MCF 10A (cell line): ENCODE measurements at regions of chr10 and their contacts with region 1.

Region 1: DNA sequence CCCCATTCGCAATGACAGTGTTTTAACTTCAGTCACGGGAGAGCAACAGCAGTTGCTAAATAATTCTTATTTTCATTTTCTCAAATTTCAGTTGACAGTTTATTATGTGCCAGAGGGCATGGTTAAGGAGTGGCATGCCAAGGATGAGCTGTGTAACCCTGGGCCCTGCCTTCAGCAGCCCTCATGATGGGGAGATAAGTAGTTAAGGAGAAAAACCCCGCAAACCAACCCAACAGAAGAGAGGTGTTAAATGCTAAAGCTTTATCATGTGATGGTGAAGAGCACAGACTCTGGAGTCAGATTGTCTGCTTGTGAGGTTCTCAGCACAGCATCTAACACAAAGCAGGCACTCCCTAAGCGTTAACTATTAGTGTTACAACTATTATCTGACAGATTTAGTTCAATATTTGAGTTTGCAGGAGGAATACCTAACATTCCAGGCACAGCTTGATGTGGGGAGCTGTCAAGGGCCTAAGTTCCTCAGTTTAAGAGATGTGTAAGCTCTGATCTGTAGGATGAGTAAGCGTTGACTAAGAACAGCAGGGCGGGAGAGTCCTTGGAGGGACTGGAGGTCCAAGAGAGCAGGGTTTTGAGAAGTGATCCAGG is 29.6 kb downstream of the STAM start:
- DNase-seq: peak; percentile 79
- H3K4me3 Mint-ChIP-seq: peak overlapping the region; percentile 7
- H3K27ac Mint-ChIP-seq: peak overlapping the region; percentile 77
- H3K4me1 Mint-ChIP-seq: peaks cover 24% of the 10 kb centered on the region
- H3K27me3 Mint-ChIP-seq: no peaks in the 10 kb centered on the region
- CTCF ChIP-seq: no peak

Region 2: DNA sequence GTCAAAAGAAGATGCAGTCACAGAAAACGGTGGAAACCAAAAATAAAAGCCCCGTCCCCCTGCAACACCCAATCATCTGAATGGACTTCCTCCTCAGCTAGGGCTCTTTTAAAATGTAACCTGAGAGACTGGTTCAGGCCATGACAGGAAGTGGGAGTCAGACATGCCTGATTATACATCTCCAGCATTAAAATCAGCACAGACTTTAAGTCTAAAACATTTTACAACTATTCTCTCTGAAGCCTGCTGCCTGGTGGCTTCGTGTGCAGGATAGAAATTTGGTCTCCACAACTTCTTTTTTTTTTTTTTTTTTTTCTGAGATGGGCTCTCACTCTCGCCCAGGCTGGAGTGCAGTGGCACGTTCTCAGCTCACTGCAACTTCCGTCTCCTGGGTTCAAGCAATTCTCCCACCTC is 86.7 kb before region 1 on chr10:
- CTCF ChIA-PET with region 1: no interaction called
- POLR2A ChIA-PET with region 1: no interaction called
- intact Hi-C with region 1: no loop called
- DNase-seq: no peak
- H3K4me3 Mint-ChIP-seq: no peak overlapping the region
- H3K27ac Mint-ChIP-seq: no peak overlapping the region
- H3K4me1 Mint-ChIP-seq: no peaks in the 10 kb centered on the region
- H3K27me3 Mint-ChIP-seq: no peaks in the 10 kb centered on the region
- CTCF ChIP-seq: no peak

Region 3: DNA sequence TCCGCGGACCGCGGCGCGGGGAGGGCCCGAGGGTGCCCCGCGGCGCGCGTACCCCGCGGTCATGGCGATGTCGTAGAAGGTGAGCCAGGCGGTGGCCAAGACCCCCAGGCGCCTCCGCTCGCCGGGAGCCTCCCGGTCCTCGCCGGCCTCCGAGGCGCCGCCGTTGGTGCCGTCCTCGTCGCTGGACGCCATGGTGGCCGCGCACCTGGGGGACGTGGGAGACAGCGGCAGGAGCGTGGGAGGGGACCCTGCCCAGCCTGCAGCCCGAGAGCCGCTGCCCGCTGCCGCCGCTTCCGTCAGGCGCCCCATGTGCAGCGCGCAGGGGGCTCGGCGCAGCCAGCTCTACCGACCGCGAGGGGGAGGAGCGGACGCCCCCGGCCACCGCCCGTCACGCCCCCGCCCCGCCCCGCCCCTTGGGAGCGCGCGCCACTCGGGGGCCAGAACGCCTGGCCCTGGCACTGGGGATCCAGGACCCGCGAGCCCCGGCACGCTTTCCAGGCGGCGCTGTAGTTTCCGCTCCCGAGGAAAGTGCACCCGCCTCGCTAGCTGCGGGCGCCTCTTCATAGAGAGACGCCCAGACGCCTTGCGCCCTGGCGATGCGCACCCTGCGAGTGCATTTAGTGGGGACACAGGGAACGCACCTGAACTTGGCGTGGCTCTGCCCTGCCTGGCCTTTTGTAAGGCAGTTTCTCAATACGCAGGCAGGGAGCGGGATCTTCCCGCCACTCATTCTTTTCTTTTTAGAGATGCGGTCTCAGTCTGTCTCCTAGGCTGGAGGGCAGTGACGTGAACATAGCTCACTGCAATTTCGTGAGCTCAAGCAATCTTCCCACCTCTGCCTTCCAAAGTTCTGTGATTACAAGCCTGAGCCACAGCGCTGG is 56.3 kb before region 1 on chr10 and contains the start of gene HACD1:
- CTCF ChIA-PET with region 1: interaction called, 10 read pairs
- POLR2A ChIA-PET with region 1: interaction called, 24 read pairs
- intact Hi-C with region 1: no loop called
- DNase-seq: peak; percentile 74
- H3K4me3 Mint-ChIP-seq: peak within 1 kb of the TSS; percentile 80
- H3K27ac Mint-ChIP-seq: no peak within 1 kb of the TSS
- H3K4me1 Mint-ChIP-seq: peaks cover 8% of the 10 kb centered on the region
- H3K27me3 Mint-ChIP-seq: no peaks in the 10 kb centered on the region
- CTCF ChIP-seq: peak; percentile 10
- total RNA-seq, gene HACD1: 29.6 and 34.2 TPM in 2 replicates

Region 4: GRCh38 chr10:17655567-17656146 is 17.9 kb before region 1 on chr10:
- CTCF ChIA-PET with region 1: interaction called, 3 read pairs
- POLR2A ChIA-PET with region 1: interaction called, 12 read pairs
- intact Hi-C with region 1: no loop called
- DNase-seq: peak; percentile 37
- H3K4me3 Mint-ChIP-seq: no peak overlapping the region
- H3K27ac Mint-ChIP-seq: peak overlapping the region; percentile 60
- H3K4me1 Mint-ChIP-seq: peaks cover 43% of the 10 kb centered on the region
- H3K27me3 Mint-ChIP-seq: no peaks in the 10 kb centered on the region
- CTCF ChIP-seq: no peak